ENCODE measurements at regions of chr14 and their contacts with region 1.

Region 1: DNA sequence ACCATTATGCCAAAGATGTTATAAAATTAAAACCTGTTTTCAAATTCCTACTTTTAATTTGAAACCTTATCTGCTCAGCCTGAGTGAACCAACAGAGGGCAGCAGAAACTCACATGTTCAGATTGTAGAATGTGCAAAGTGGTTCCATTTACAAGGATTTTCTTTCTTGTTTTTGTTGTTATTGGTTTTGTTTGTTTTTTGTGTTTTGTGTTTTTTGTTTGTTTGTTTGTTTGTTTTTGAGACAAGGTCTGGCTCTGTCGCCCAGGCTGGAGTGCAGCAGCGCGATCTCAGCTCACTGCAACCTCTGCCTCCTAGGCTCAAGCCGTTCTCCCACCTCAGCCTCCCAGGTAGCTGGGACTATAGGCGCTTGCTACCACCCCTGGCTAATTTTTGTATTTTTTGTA is 22.8 kb upstream of the GARIN2 start:
- DNase-seq: no peak
- ATAC-seq: peak; percentile 48 to 68
- H3K4me3 ChIP-seq: no peak overlapping the region
- H3K27ac ChIP-seq: no peak overlapping the region
- H3K4me1 ChIP-seq: no peaks in the 10 kb centered on the region
- H3K27me3 ChIP-seq: no peaks in the 10 kb centered on the region
- CTCF ChIP-seq: peak; percentile 74

Region 2: GRCh38 chr14:67269298-67270061 is 103.0 kb after region 1 on chr14:
- intact Hi-C with region 1: no loop called
- DNase-seq: no peak
- ATAC-seq: peak; percentile 56 to 80
- H3K4me3 ChIP-seq: peak overlapping the region; percentile 10
- H3K27ac ChIP-seq: peak overlapping the region; percentile 21
- H3K4me1 ChIP-seq: peaks cover 36% of the 10 kb centered on the region
- H3K27me3 ChIP-seq: no peaks in the 10 kb centered on the region
- CTCF ChIP-seq: no peak

Region 3: GRCh38 chr14:67285876-67286452 is 119.5 kb after region 1 on chr14:
- intact Hi-C with region 1: loop called (anchors 10 kb)
- DNase-seq: no peak
- ATAC-seq: no peak
- H3K4me3 ChIP-seq: no peak overlapping the region
- H3K27ac ChIP-seq: no peak overlapping the region
- H3K4me1 ChIP-seq: no peaks in the 10 kb centered on the region
- H3K27me3 ChIP-seq: no peaks in the 10 kb centered on the region
- CTCF ChIP-seq: peak; percentile 59

Measured in lower lobe of right lung (tissue), 2 donors.